Colonic mucosa (tissue), 4 donors: ENCODE measurements at regions of chr6 and their contacts with region 1.

Region 1: GRCh38 chr6:139230391-139230840 is 61.4 kb downstream of the TXLNB start:
- DNase-seq: no peak
- H3K4me3 ChIP-seq: no peak overlapping the region
- H3K27ac ChIP-seq: no peak overlapping the region
- H3K4me1 ChIP-seq: no peaks in the 10 kb centered on the region
- H3K27me3 ChIP-seq: no peaks in the 10 kb centered on the region
- CTCF ChIP-seq: no peak

Region 2: GRCh38 chr6:139124887-139125672 is 105.3 kb before region 1 on chr6:
- intact Hi-C with region 1: loop called (anchors 10 kb)
- DNase-seq: peak; percentile 79
- H3K4me3 ChIP-seq: no peak overlapping the region
- H3K27ac ChIP-seq: no peak overlapping the region
- H3K4me1 ChIP-seq: no peaks in the 10 kb centered on the region
- H3K27me3 ChIP-seq: no peaks in the 10 kb centered on the region
- CTCF ChIP-seq: peak; percentile 46

Region 3: GRCh38 chr6:139173172-139173571 is 57.2 kb before region 1 on chr6:
- intact Hi-C with region 1: no loop called
- DNase-seq: no peak
- H3K4me3 ChIP-seq: no peak overlapping the region
- H3K27ac ChIP-seq: no peak overlapping the region
- H3K4me1 ChIP-seq: no peaks in the 10 kb centered on the region
- H3K27me3 ChIP-seq: no peaks in the 10 kb centered on the region
- CTCF ChIP-seq: no peak